PC-9 (cell line): ENCODE measurements at regions of chr16 and their contacts with region 1.

Region 1: DNA sequence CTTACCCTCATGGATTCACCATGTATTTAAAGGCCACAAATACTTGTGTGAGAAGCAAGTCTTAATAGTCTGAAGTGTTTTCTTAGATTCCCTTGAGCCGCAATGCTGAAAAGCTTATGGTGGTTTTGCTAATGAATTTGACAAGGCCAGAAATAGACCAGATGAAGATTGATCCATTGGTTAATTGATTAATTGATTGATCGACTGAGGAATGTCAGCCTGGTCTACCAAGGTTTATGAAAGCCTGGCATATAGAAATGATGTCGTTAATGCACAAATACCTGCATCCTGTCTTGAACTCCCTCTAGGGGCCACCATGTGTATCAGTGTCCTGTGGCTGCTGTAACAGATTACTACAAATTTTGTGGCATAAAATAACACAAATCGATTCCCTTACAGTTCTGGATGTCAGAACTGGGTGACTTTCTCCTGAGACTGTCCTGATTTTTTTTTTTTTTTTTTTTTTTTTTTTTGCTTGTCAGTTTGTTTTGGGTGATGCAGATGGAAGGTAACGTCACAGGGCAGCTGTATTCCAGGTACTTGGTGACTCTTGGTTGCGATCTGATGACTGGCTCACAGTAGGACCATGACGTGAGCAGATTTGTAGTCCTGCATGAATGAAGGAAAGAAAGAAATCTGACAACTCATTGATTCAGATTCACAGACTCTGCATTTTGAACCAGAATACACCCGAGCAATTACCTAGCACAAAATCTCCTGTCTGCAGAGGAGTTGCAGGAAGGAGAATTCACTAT is 553.1 kb downstream of the MAF start:
- DNase-seq: no peak
- H3K4me3 ChIP-seq: no peak overlapping the region
- H3K27ac ChIP-seq: no peak overlapping the region
- H3K4me1 ChIP-seq: no peaks in the 10 kb centered on the region
- H3K27me3 ChIP-seq: no peaks in the 10 kb centered on the region
- CTCF ChIP-seq: peak; percentile 64

Region 2: GRCh38 chr16:78770353-78771091 is 276.9 kb before region 1 on chr16:
- CTCF ChIA-PET with region 1: no interaction called
- POLR2A ChIA-PET with region 1: no interaction called
- intact Hi-C with region 1: no loop called
- DNase-seq: peak in 1 of 2 experiments; percentile 35
- H3K4me3 ChIP-seq: no peak overlapping the region
- H3K27ac ChIP-seq: no peak overlapping the region
- H3K4me1 ChIP-seq: no peaks in the 10 kb centered on the region
- H3K27me3 ChIP-seq: no peaks in the 10 kb centered on the region
- CTCF ChIP-seq: peak; percentile 58

Region 3: DNA sequence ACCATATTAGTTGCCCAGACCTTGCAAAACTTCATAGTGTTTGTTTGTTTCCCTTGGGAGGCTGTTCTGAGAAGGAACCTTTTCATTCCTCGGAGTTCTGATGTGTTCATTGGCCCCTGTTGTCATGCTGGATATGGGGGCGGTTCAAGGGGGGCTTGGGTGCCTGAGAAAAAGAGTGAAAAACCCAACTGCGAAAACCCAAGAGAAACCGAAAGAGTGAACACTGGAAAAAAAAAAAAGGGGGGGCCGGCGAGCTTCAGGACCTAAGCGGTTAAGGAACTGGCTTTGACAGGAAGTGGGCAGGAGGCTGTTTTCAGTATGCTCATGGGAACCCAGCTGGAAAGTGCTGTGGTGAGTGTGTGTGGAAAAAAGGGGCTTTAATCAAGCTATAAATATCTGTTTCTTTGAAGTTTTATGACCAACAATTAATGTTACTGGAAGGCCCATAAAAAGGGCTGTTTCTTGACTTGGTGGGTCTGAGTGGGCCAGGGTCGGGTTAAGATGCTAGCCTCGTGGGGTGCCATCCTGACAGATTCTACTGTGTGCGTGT is 42.4 kb after region 1 on chr16:
- CTCF ChIA-PET with region 1: interaction called, 5 read pairs
- POLR2A ChIA-PET with region 1: no interaction called
- intact Hi-C with region 1: loop called (anchors 1 kb)
- DNase-seq: no peak
- H3K4me3 ChIP-seq: no peak overlapping the region
- H3K27ac ChIP-seq: no peak overlapping the region
- H3K4me1 ChIP-seq: no peaks in the 10 kb centered on the region
- H3K27me3 ChIP-seq: no peaks in the 10 kb centered on the region
- CTCF ChIP-seq: no peak